ENCODE measurements at regions of chr22 and their contacts with region 1.

Region 1: DNA sequence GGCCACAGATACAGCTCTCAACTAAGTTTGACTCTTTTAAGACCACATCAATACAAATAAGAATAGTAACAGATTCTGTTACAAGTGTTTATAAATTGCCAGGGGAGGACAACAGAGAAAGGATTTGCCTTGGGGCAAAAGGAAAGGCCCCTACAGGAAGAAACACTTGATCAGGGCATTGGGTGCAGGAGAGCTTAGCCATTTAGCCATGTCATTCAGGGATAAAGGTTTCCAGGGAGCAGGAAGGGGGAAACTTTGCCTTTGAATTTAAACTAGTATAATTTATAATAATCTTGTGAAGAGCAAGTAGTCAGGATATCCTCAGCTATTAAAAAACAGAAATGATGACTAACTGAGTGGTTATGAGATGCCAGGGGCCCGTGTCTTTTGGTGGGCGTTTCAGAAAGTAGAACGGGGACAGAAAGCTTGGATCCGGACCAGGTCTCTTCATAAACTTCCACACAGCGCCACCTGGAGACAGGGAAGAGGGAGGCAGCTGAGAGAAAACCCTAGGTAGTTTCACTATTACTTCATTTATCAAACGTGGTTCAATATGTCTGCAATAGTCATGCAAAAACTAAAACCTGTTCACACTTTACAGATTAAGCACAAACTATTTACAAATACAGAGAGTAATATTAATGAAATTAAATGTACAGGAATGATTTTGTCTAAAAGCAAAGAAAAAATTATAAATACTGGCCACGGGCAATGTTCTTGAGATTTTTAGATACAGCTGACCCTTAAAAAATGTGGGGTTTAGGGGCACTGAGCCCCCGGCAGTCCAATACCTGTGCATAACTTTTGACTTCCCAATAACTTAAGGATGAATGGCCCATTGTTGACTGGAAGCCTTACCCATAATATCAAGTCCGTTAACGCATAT is 11.0 kb upstream of the SLC5A4 start:
- DNase-seq: peak; percentile 81
- H3K4me3 ChIP-seq: no peak overlapping the region
- H3K27ac ChIP-seq: no peak overlapping the region
- H3K4me1 ChIP-seq: peaks cover 5% of the 10 kb centered on the region
- H3K27me3 ChIP-seq: no peaks in the 10 kb centered on the region
- CTCF ChIP-seq: peak; percentile 85 to 90
- POLR2A ChIP-seq: no peak

Region 2: DNA sequence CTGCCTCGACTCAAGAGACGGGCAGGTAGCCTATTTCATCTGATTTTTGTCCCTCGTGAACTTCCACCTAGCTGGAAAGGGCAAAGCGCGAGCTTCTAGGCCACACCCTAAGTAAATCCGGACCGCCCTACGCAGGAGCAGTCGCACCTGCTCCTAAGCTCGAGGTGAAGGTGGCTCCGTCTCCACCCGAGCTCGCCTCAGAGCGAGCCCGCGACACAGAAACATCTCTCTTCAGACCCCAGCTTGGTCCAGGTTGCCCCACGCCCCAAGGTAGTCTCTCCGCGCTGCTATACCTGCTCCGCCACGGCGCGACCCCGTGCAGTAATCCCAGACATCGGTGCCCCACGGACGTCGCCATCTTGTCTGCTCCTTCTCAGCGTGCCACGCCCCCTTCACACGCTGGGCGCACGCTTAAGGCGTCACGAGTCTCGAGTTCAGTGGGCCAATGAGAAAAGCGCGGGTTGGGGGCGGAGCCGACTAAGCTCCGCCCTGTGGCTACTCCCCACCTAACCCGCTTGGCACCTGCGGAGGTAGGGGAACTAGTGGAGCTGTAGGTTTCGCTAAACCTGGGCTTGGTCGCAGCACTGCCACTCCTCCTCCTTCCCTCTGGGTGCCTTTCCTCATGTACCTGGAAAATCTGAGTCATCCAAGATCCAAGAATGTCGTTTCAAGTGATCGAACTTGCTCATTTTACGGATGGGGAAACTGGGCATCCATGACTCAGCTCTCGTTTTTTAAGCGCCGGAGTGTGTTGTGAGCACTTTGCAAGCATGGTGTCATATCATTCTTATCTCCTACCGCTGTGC is 604.1 kb before region 1 on chr22 and contains the start of gene PISD:
- CTCF ChIA-PET with region 1: interaction called, 27 read pairs
- POLR2A ChIA-PET with region 1: no interaction called
- dilution Hi-C with region 1: no loop called
- intact Hi-C with region 1: loop called (anchors 5 kb)
- DNase-seq: peak; percentile 96
- H3K4me3 ChIP-seq: peak within 1 kb of the TSS; percentile 69 to 92 (median 90)
- H3K27ac ChIP-seq: peak within 1 kb of the TSS; percentile 63
- H3K4me1 ChIP-seq: peaks cover 11% of the 10 kb centered on the region
- H3K27me3 ChIP-seq: no peaks in the 10 kb centered on the region
- CTCF ChIP-seq: no peak
- POLR2A ChIP-seq: peak; percentile 68
- total RNA-seq, gene PISD: 53.2 and 58.0 TPM in 2 replicates

Region 3: GRCh38 chr22:31977141-31977841 is 288.8 kb before region 1 on chr22:
- CTCF ChIA-PET with region 1: interaction called, 63 read pairs
- POLR2A ChIA-PET with region 1: no interaction called
- dilution Hi-C with region 1: no loop called
- intact Hi-C with region 1: loop called (anchors 1 kb)
- DNase-seq: peak; percentile 48
- H3K4me3 ChIP-seq: no peak overlapping the region
- H3K27ac ChIP-seq: no peak overlapping the region
- H3K4me1 ChIP-seq: no peaks in the 10 kb centered on the region
- H3K27me3 ChIP-seq: no peaks in the 10 kb centered on the region
- CTCF ChIP-seq: peak; percentile 72 to 74
- POLR2A ChIP-seq: no peak

Region 4: GRCh38 chr22:32103658-32104315 is 162.3 kb before region 1 on chr22:
- CTCF ChIA-PET with region 1: interaction called, 43 read pairs
- POLR2A ChIA-PET with region 1: no interaction called
- dilution Hi-C with region 1: no loop called
- intact Hi-C with region 1: loop called (anchors 1 kb)
- DNase-seq: no peak
- H3K4me3 ChIP-seq: no peak overlapping the region
- H3K27ac ChIP-seq: no peak overlapping the region
- H3K4me1 ChIP-seq: no peaks in the 10 kb centered on the region
- H3K27me3 ChIP-seq: peaks cover 2 to 5% of the 10 kb centered on the region in 2 experiments
- CTCF ChIP-seq: peak in 1 of 2 donors; percentile 5
- POLR2A ChIP-seq: no peak

Region 5: DNA sequence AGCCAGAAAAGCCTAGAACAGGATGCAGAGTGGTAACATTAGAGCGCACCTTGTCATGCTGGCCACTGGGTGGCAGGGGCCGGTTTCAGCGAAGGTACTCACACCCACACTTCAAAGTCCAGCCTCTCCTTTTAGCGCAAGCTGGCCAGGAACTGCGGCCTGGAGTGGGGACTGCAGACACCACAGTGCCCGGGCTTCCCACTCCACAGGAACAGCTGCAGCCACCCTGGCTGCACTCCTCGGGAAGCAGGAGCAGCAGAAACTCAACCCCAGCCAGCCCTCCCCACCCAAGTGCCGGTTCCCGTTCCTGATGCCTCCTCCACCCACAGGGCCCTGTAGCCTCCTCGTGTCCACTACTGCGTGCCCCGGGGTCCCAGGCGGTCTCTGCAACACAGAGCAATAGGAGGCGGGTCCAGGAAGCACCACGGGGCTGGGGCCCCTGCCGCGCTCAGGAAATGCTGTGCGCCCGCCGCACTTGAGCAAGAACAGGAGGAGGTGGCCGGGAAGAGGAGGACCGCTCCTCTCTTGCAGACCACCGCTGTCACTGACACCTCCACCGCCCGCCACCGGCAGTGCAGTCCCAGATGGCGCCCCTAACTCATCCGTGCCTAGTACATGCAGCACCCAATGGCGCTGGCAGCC is 63.5 kb before region 1 on chr22:
- CTCF ChIA-PET with region 1: interaction called, 29 read pairs
- POLR2A ChIA-PET with region 1: no interaction called
- dilution Hi-C with region 1: no loop called
- intact Hi-C with region 1: loop called (anchors 1 kb)
- DNase-seq: peak; percentile 45
- H3K4me3 ChIP-seq: no peak overlapping the region
- H3K27ac ChIP-seq: no peak overlapping the region
- H3K4me1 ChIP-seq: no peaks in the 10 kb centered on the region
- H3K27me3 ChIP-seq: peaks cover 4 to 19% of the 10 kb centered on the region in 2 experiments
- CTCF ChIP-seq: peak; percentile 51 to 76
- POLR2A ChIP-seq: no peak

Region 6: DNA sequence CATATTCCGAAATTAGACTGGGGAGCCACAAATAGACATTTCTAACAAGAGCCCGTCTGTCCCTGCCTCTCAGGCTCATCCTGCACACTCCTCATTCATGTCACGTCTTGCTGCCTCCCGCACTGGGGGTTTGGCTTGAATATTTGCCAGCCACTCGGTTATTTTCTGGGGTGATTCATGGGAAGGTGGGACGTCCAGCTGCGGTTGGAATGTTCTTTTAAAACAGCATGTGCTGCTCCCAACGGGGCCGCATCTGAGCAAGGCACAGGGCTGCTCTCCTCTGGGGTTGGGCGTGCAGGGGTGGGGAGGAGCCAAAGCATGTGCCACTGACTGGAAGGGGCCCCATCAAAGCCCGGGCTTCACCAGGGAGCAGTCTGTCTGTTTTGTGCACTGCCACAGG is 14.9 kb after region 1 on chr22:
- CTCF ChIA-PET with region 1: interaction called, 11 read pairs
- POLR2A ChIA-PET with region 1: no interaction called
- dilution Hi-C with region 1: no loop called
- intact Hi-C with region 1: no loop called
- DNase-seq: no peak
- H3K4me3 ChIP-seq: no peak overlapping the region
- H3K27ac ChIP-seq: no peak overlapping the region
- H3K4me1 ChIP-seq: no peaks in the 10 kb centered on the region
- H3K27me3 ChIP-seq: no peaks in the 10 kb centered on the region
- CTCF ChIP-seq: no peak
- POLR2A ChIP-seq: no peak

Region 7: GRCh38 chr22:32462452-32462851 is 196.3 kb after region 1 on chr22:
- CTCF ChIA-PET with region 1: no interaction called
- POLR2A ChIA-PET with region 1: no interaction called
- dilution Hi-C with region 1: no loop called
- intact Hi-C with region 1: no loop called
- DNase-seq: no peak
- H3K4me3 ChIP-seq: no peak overlapping the region
- H3K27ac ChIP-seq: no peak overlapping the region
- H3K4me1 ChIP-seq: no peaks in the 10 kb centered on the region
- H3K27me3 ChIP-seq: peaks cover 3 to 19% of the 10 kb centered on the region in 2 experiments
- CTCF ChIP-seq: no peak
- POLR2A ChIP-seq: no peak

Region 8: DNA sequence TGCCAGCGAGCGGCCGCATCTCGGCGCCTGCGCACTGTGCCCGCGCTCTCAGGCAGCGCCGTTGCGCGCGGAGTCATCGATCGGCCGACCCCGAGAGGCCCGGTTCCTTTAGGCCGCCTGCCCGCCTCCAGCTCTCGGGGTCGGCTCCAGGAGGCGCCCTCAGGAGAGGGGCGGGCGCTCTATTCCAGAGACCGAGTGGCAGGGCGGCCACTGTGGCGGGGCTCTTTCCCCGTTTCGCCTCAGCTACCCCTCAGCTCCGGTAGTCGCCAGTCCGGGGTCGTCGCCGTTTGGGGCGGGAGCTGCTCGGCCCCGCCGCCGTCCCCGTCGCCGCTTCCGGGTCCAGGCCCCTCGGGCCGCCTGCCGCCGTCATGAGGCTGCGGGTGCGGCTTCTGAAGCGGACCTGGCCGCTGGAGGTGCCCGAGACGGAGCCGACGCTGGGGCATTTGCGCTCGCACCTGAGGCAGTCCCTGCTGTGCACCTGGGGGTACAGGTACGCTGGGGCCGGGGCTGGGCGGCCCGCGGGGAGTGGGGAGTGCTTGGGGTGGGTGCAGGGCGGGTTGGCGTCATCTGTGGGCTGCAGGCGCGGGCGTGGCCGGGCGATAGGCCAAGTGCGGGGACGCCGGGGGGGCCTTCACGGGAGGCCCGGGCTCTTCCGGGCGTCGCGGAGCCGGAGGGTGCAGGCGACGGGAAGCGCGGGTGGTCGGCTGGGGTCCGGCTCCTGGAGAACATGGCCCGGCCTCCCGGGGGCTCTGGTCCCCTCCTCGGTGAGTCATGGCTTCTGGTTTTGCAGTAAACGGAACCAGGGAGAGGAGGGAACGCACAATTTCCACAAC is 208.7 kb after region 1 on chr22 and contains the start of gene FBXO7:
- CTCF ChIA-PET with region 1: interaction called, 3 read pairs
- POLR2A ChIA-PET with region 1: no interaction called
- dilution Hi-C with region 1: no loop called
- intact Hi-C with region 1: loop called (anchors 2 kb)
- DNase-seq: peak; percentile 92
- H3K4me3 ChIP-seq: peak within 1 kb of the TSS; percentile 77 to 88 (median 81)
- H3K27ac ChIP-seq: peak within 1 kb of the TSS; percentile 90
- H3K4me1 ChIP-seq: peaks cover 20% of the 10 kb centered on the region
- H3K27me3 ChIP-seq: no peaks in the 10 kb centered on the region
- CTCF ChIP-seq: peak in 1 of 2 donors; percentile 66
- POLR2A ChIP-seq: peak; percentile 20
- total RNA-seq, gene FBXO7: 79.0 and 81.1 TPM in 2 replicates

Region 9: DNA sequence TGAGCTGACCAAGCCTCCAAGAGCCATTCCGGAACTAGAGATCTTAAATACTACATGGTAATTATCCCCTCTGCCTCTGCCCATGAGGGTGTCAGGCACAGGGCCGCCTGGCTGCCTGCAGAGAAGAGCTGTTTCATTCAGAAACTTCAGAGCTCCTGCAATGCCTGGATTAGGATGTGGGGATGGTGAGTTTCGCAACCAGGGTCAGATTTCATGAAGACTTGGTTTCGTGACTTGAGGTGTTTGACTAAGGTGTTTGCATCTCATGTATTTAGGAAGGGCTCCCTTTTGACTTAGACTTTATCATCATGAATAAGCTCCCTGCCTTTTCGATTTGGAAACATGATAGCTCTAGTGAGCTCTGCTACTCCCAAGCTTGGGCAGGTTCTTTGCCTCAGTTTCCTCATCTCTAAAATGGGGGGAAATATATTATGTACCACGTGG is 544.5 kb after region 1 on chr22:
- CTCF ChIA-PET with region 1: no interaction called
- POLR2A ChIA-PET with region 1: no interaction called
- dilution Hi-C with region 1: no loop called
- intact Hi-C with region 1: no loop called
- DNase-seq: no peak
- H3K4me3 ChIP-seq: no peak overlapping the region
- H3K27ac ChIP-seq: no peak overlapping the region
- H3K4me1 ChIP-seq: no peaks in the 10 kb centered on the region
- H3K27me3 ChIP-seq: no peaks in the 10 kb centered on the region
- CTCF ChIP-seq: no peak
- POLR2A ChIP-seq: no peak

Measured in endothelial cell of umbilical vein (primary cell).